Activated B cell treated with CpG ODN at 0.5 μM for 24 hours (primary cell): ENCODE measurements at regions of chr9 and their contacts with region 1.

Region 1: DNA sequence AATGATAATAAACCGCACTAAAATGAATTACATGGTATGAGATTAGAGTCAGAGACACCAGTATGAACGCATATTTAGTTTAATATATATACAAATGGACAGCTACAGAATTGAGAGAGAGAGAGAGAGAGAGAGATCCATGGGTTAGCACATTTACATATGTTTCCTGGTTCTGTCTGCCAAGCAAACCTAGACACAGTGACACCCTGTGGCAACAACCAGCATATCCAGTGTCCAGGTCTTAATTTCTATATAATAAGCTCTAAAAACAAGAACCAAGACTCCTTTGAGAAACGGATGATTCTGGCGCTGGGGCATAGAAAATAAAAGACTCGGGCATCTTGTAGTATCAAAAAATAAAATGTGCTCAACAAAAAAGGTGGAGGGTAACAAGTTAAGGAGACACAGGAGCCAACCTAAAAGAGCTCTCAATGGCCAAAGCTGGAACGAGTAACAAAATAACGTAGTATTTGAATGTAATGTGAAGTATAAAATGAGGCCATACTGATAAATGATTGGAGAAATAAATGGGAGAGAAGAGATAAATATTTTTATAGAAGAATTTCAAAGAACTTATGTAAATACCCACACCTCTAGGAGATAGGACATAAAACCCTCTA is 84.5 kb downstream of the RFX3 start:
- DNase-seq: no peak
- ATAC-seq: peak; percentile 92
- H3K4me3 Mint-ChIP-seq: no peak overlapping the region
- H3K27ac Mint-ChIP-seq: no peak overlapping the region
- H3K4me1 Mint-ChIP-seq: peaks cover 11% of the 10 kb centered on the region
- H3K27me3 Mint-ChIP-seq: no peaks in the 10 kb centered on the region
- CTCF ChIP-seq: no peak

Region 2: DNA sequence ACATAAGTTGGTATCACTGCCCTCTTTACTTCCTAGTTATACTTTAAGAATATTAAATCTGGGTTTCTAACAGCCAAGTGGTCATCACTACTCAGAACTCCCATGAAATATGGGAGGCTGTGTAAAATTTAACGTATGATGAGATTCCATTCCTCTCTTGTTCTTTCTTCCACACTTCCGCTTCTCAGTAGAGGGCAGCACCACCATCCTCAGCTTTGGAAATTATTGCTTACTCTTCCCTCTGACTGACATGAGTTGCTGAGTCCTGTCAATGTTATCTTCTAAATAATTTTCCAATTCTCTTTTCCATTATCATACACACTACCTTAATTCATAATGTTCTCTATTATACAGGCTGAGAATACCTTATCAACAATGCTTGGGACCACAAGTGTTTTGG is 109.5 kb before region 1 on chr9:
- CTCF ChIA-PET with region 1: interaction called, 24 read pairs
- POLR2A ChIA-PET with region 1: no interaction called
- intact Hi-C with region 1: loop called (anchors 5 kb)
- DNase-seq: no peak
- ATAC-seq: no peak
- H3K4me3 Mint-ChIP-seq: no peak overlapping the region
- H3K27ac Mint-ChIP-seq: no peak overlapping the region
- H3K4me1 Mint-ChIP-seq: no peaks in the 10 kb centered on the region
- H3K27me3 Mint-ChIP-seq: no peaks in the 10 kb centered on the region
- CTCF ChIP-seq: no peak

Region 3: DNA sequence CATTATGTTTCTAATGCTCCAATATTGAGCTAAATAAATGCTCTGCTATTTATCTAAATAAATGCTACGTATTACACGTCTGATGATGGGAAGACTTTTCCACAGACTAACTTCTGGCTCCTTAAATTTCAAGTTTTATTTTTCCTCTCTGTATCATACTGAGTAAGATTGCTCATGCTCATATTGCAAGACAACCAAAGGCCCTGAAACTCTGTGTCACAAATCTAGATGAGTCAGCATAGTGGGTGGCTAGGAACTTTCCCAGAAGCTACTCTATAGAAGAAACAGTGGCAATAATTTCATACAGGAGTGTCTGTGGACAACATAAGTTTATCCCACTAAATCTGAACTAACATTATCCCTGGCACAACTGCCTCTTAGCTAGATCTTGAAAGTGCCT is 137.5 kb after region 1 on chr9:
- CTCF ChIA-PET with region 1: no interaction called
- POLR2A ChIA-PET with region 1: no interaction called
- intact Hi-C with region 1: no loop called
- DNase-seq: no peak
- ATAC-seq: no peak
- H3K4me3 Mint-ChIP-seq: no peak overlapping the region
- H3K27ac Mint-ChIP-seq: no peak overlapping the region
- H3K4me1 Mint-ChIP-seq: peaks cover 6% of the 10 kb centered on the region
- H3K27me3 Mint-ChIP-seq: no peaks in the 10 kb centered on the region
- CTCF ChIP-seq: no peak